Panc1 (cell line): ENCODE measurements at regions of chr11 and their contacts with region 1.

Region 1: DNA sequence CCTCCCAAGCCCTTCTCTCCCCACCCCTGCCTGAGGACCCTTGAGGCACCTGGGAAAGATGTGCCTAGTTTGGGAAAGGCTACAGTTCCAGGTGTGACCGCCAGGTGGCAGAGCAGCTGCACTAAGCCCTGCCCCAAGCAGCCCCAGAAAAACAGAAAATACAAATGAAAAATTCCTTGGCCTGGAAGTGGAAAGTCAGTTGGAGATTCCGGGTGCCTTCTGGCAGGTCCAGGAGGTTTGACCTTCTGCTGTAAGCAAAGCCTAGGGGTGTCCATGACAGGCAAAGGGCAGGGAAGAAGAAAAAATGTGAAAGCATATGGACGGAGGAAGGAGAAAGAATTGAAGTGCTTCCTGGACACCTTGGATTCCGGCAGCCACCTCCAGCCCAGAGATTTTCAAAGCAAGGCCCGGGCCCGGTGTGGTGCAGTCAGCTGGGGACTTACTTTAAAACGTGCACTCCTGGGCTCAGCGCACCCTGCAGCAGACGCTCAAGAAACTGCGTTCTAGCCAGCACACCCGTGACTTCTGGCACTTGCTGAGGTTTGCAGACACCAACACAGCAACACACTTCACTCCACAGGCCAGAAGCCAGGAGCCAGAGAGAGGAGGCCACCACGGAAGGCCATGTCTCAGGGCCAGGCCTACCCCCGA is 37.3 kb upstream of the SLC22A12 start:
- DNase-seq: peak; percentile 39
- ATAC-seq: peak; percentile 73
- H3K4me3 ChIP-seq: no peak overlapping the region
- H3K27ac ChIP-seq: no peak overlapping the region
- H3K4me1 ChIP-seq: no peaks in the 10 kb centered on the region
- H3K27me3 ChIP-seq: no peaks in the 10 kb centered on the region
- CTCF ChIP-seq: peak; percentile 98

Region 2: GRCh38 chr11:64263021-64263946 is 290.4 kb before region 1 on chr11:
- CTCF ChIA-PET with region 1: no interaction called
- POLR2A ChIA-PET with region 1: no interaction called
- in situ Hi-C with region 1: no loop called
- intact Hi-C with region 1: no loop called
- DNase-seq: no peak
- ATAC-seq: no peak
- H3K4me3 ChIP-seq: no peak overlapping the region
- H3K27ac ChIP-seq: no peak overlapping the region
- H3K4me1 ChIP-seq: peaks cover 6% of the 10 kb centered on the region
- H3K27me3 ChIP-seq: no peaks in the 10 kb centered on the region
- CTCF ChIP-seq: no peak

Region 3: DNA sequence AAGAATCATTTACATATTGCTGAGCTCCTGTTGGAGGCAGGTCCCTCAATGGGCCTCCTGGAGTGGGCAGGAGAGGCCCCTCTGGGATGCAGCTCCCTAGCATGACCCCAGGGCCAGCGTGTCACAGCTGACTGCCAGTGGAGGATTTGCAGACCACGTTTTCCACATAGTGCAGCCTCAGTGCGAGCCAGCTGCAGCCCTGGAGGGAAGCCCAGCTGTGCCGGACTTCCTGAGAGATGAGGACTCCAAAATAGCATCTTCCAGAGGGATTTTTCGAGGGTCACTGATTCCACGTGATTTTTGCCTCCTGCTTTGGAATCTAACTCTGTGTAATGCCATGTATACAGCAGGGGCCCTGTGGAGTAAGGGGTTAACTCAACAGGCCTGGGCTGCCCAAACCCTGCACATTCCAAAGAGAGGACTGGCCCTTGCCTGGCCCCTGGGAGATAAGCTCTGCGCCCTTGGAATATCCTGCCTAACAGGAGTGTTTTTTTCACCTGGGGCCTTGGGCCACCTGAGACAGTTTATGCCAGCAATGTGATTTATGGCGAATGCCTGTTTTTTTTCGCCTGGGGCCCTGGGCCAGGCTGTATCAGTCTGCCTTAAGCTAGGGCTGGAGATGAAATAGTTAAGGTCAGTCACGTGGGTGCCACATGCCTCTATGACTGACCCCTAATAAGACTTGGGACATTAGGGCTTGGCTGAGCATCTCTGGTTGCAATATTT is 147.3 kb before region 1 on chr11:
- CTCF ChIA-PET with region 1: no interaction called
- POLR2A ChIA-PET with region 1: no interaction called
- in situ Hi-C with region 1: no loop called
- intact Hi-C with region 1: no loop called
- DNase-seq: no peak
- ATAC-seq: no peak
- H3K4me3 ChIP-seq: no peak overlapping the region
- H3K27ac ChIP-seq: no peak overlapping the region
- H3K4me1 ChIP-seq: no peaks in the 10 kb centered on the region
- H3K27me3 ChIP-seq: peaks cover 2% of the 10 kb centered on the region; the same call in 1 of the 2 replicates
- CTCF ChIP-seq: no peak

Region 4: DNA sequence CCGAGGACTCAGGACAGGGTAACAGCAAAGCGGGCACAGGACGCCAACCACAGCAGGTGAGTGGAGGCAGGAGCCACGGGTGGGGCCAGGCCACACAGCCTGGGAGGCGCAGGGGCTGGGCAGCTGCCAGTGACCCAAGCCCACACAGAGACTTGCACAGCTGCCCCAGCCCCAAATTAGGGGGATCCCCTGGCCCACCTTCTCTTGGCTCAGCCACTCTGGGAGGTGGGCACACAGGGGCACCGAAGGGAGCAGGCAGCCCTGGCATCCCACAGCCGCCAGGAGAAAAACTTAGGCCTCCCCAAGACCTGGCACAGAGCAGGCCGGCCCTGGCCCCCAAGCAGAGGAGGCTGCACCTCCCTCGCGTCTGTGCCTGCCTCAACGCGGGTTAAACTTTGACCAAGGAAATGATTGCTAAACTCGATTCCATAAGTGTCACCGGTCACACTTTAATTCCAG is 37.1 kb after region 1 on chr11 and contains the start of gene SLC22A12:
- CTCF ChIA-PET with region 1: interaction called, 16 read pairs
- POLR2A ChIA-PET with region 1: no interaction called
- in situ Hi-C with region 1: no loop called
- intact Hi-C with region 1: no loop called
- DNase-seq: no peak
- ATAC-seq: 0 out of 2 replicates have a peak, but pooled peaks have one; percentile 31
- H3K4me3 ChIP-seq: no peak within 1 kb of the TSS
- H3K27ac ChIP-seq: no peak within 1 kb of the TSS
- H3K4me1 ChIP-seq: no peaks in the 10 kb centered on the region
- H3K27me3 ChIP-seq: no peaks in the 10 kb centered on the region
- CTCF ChIP-seq: no peak
- total RNA-seq, gene SLC22A12: not detected